Left cardiac atrium (tissue), 4 donors: ENCODE measurements at regions of chr16 and their contacts with region 1.

Region 1: GRCh38 chr16:82229796-82230619 is 60.0 kb upstream of the MPHOSPH6 start:
- DNase-seq: peak; percentile 69
- ATAC-seq: peak; percentile 59 to 60

Region 2: GRCh38 chr16:81891736-81892357 is 338.2 kb before region 1 on chr16:
- intact Hi-C with region 1: loop called (anchors 2 to 5 kb)
- DNase-seq: no peak
- ATAC-seq: no peak

Region 3: GRCh38 chr16:81940781-81941560 is 289.0 kb before region 1 on chr16:
- intact Hi-C with region 1: loop called in 1 of 2 experiments (anchors 5 kb)
- DNase-seq: no peak
- ATAC-seq: peak in 1 of 2 donors; percentile 56

Region 4: DNA sequence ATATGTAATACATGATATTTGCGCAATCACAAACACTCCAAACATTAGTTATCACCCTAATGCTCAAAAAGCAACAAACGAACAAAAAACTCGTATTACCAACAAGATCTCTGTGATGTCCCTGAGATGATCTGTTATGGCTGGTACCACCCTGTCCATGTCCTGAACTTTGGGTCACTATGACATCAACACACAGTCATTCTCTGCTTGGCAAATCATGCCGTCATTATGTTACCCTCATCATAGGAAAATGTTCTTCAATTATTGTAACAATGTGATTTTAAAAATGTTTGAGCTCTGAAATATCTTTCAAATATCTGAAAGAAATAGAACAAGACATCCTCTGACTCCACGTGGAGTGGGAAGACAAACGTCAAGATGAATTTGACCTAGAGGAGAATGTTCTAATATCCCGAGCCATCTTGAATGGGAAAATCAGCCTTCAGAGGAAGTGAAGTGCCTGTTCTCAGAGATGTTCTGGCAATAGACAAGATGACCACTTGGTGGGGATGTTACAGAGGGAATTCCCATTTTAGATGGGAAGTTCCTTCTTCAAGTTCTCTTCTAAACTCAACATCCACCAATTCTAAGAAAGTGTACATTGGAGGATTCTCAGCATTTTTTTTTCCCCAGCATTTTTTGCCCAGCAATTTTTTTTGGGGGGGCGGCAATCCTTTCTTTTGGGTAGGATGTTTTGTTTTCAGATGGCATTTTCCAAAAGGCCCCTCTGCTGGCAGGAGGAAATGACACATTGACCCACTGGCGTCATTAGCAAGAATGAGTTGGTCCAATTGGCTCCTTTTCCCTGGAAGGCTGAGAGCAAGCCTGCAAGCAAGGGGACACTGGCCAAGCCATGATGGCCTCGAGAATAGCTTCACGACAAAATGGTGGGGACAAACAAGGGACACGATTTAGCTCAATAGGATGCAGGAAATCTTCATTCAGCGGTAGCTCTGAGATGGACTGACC is 198.6 kb before region 1 on chr16:
- intact Hi-C with region 1: loop called (anchors 5 to 10 kb)
- DNase-seq: no peak
- ATAC-seq: no peak

Region 5: DNA sequence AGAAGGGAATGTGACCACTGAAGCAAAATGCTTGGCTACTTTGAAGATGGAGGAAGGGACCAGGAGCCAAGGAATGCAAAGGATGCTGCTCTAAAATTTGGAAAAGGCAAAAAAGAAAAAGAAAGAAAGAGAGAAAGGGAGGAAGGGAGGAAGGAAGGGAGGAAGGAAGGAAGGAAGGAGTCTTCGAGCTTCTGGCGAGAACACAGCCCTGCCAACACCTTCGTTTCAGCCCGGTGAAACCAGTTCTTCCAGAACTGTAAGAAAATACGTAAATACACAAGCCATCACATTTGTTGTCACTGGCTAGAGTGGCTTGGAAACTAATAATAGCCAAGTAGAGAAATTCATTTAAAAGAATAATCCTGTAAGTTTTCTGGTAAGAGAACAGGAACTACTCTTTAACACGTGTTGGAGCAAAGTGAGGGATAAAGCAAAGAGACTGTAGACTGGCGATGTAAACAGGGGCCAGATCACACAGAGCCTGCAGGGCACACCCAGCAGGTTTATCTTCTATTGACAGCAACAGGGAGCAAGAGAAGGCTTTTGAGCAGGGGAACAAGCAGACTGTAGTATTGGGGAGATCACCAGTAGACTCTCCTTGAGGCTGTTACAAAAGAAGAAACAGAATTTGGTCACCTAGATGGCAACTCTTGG is 128.7 kb after region 1 on chr16:
- intact Hi-C with region 1: no loop called
- DNase-seq: no peak
- ATAC-seq: no peak